ENCODE measurements at regions of chr9 and their contacts with region 1.

Region 1: GRCh38 chr9:68685770-68686169 is 19.3 kb upstream of the PIP5K1B start:
- DNase-seq: no peak
- H3K4me3 ChIP-seq: no peak overlapping the region
- H3K27ac ChIP-seq: no peak overlapping the region
- H3K27me3 ChIP-seq: peaks cover 0 to 25% (median 3%) of the 10 kb centered on the region in 45 donors
- CTCF ChIP-seq: peak in 9 of 56 donors; percentile 11 to 27 (median 15)

Region 2: GRCh38 chr9:68704814-68705530 is 19.2 kb after region 1 on chr9 and contains the start of gene PIP5K1B:
- intact Hi-C with region 1: no loop called
- DNase-seq: peak; percentile 22 to 75 (median 60)
- H3K4me3 ChIP-seq: peak within 1 kb of the TSS; percentile 48 to 83 (median 72)
- H3K27ac ChIP-seq: peak within 1 kb of the TSS in 54 of 59 donors; percentile 21 to 90 (median 76)
- H3K27me3 ChIP-seq: peaks cover 0 to 22% (median 0%) of the 10 kb centered on the region in 45 donors
- CTCF ChIP-seq: peak in 8 of 56 donors; percentile 7 to 21 (median 15)
- total RNA-seq, gene PIP5K1B: 5.1 to 44.4 (median 21.5) TPM

Region 3: DNA sequence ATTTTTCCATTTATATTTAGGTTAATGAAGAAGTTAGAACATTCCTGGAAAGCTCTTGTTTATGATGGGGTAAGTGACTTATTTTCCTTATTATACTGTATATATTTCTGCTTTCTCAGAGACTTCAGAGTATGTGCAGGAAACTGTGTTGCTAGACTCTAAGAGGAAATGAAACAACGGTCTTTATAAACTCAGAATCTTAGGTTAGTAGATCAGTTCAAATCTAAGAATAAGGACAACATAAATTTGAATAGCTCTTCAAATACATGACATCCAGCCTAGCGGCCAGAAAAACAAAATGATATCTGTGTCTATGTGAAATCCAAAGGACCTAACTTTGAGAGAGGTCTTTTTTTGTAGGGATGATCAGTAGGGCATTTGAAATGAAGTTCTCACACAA is 233.9 kb after region 1 on chr9:
- intact Hi-C with region 1: loop called in 1 of 2 experiments (anchors 10 kb)
- DNase-seq: no peak
- H3K4me3 ChIP-seq: no peak overlapping the region
- H3K27ac ChIP-seq: no peak overlapping the region
- H3K27me3 ChIP-seq: no peaks in the 10 kb centered on the region
- CTCF ChIP-seq: no peak

Region 4: DNA sequence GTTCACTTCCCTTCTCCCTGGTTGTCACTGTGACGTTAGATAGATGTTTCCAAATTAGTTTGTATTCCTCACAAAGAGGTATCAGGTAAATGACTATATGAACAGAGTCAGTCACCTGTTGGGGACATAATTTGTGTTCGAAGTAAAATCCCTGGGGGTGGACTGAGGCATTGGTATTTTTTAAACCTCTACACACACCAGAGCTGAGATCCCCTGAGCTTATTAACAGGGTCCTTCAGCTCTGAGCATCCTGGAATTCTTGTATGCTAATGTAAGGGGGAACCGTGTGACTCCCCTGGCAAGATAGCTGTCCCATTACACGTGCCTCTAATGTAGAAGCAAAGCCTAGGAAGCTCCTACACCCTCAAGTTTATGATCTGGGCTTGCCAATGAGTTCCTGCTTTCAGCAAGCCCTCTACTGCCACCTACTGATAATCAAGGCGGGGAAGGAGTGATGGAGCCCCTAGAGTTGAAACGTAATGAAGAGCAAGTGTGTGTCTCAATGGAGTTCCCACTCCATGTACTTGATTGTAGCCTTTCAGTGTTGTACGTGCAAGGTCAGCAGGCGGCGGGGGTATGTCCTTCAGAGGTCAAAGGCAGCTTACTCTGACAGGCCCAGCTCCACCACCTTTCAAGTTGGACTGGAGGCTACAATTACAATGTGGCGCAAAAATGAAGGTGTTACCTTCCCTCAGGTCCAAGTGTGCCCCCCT is 313.8 kb after region 1 on chr9:
- intact Hi-C with region 1: no loop called
- DNase-seq: peak in 8 of 10 donors; percentile 56 to 81 (median 70)
- H3K4me3 ChIP-seq: no peak overlapping the region
- H3K27ac ChIP-seq: peak overlapping the region in 16 of 59 donors; percentile 10 to 77 (median 52)
- H3K27me3 ChIP-seq: no peaks in the 10 kb centered on the region
- CTCF ChIP-seq: peak; percentile 57 to 96 (median 81)

Measured in dorsolateral prefrontal cortex (tissue), 120 donors.